ENCODE measurements at regions of chr2 and their contacts with region 1.

Region 1: DNA sequence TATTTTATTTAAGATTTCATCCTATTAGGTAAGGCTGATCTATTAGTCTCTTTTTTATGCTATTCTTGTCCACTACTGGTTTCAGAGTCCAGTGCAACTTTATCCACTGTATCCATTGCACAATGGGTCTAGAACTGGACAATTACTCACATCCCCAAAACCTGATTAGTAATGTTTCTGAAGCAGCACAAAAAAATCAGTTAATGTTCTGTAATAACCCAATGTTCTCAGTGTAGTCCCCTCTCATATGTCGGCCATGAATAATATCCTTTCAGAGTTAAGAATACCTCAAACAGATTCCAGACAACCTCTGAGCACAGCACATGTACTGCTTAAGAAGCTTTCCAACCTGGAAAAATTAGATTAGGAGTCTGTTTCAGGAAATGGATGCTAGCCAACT is 29.7 kb downstream of the MGAT4A start:
- DNase-seq: no peak
- H3K4me3 ChIP-seq: no peak overlapping the region
- H3K27ac ChIP-seq: peak overlapping the region; percentile 67 to 82
- H3K4me1 ChIP-seq: peaks cover 2 to 33% of the 10 kb centered on the region in 2 donors
- H3K27me3 ChIP-seq: no peaks in the 10 kb centered on the region
- CTCF ChIP-seq: no peak

Region 2: GRCh38 chr2:98654699-98655495 is 46.3 kb before region 1 on chr2:
- intact Hi-C with region 1: no loop called
- DNase-seq: no peak
- H3K4me3 ChIP-seq: no peak overlapping the region
- H3K27ac ChIP-seq: no peak overlapping the region
- H3K4me1 ChIP-seq: no peaks in the 10 kb centered on the region
- H3K27me3 ChIP-seq: no peaks in the 10 kb centered on the region
- CTCF ChIP-seq: no peak

Region 3: DNA sequence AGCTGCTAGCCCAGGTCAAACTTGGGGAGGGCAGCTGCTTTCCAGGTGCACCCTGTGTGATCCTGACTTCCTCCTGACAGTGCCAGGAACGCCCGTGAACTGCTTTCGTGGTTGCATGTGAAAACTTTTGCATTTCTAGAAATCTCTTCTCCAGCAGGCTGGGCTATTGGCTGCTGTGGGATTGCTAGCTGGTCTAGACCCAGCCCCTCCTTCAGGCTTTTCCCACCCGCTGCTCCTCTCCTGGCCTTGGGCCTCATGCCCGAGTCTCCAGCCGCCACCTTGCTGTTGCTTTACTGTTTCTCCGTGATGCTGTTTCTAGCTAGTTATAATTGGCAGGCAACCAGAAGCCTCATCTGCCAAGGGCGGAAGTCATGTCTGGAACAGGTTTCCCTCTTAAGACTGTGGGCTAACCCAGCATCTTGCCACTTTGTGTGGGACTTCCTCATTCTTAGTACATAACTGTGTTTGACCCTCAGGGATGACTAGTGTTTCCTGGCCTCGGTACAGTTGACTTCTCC is 56.7 kb after region 1 on chr2:
- intact Hi-C with region 1: loop called (anchors 2 kb)
- DNase-seq: peak in 1 of 2 donors; percentile 92
- H3K4me3 ChIP-seq: peak overlapping the region; percentile 14 to 46
- H3K27ac ChIP-seq: peak overlapping the region; percentile 11 to 43
- H3K4me1 ChIP-seq: peaks cover 0 to 11% of the 10 kb centered on the region in 2 donors
- H3K27me3 ChIP-seq: no peaks in the 10 kb centered on the region
- CTCF ChIP-seq: no peak

Measured in ascending aorta (tissue), 2 donors.